WTC11 (cell line): ENCODE measurements at regions of chr11 and their contacts with region 1.

Region 1: GRCh38 chr11:1694064-1694845 is 2.7 kb upstream of the KRTAP5-6 start:
- DNase-seq: peak; percentile 92
- ATAC-seq: peak; percentile 86
- H3K4me3 Mint-ChIP-seq: peak overlapping the region; percentile 35; the same call in 1 of the 2 replicates
- H3K27ac Mint-ChIP-seq: no peak overlapping the region
- H3K4me1 Mint-ChIP-seq: peaks cover 3% of the 10 kb centered on the region
- H3K27me3 Mint-ChIP-seq: peaks cover 22% of the 10 kb centered on the region
- CTCF ChIP-seq: peak; percentile 93

Region 2: GRCh38 chr11:1706634-1707400 is 12.6 kb after region 1 on chr11:
- CTCF ChIA-PET with region 1: interaction called, 31 read pairs
- POLR2A ChIA-PET with region 1: no interaction called
- DNase-seq: peak; percentile 36
- ATAC-seq: no peak; the same call in 1 of the 2 replicates
- H3K4me3 Mint-ChIP-seq: no peak overlapping the region
- H3K27ac Mint-ChIP-seq: no peak overlapping the region
- H3K4me1 Mint-ChIP-seq: no peaks in the 10 kb centered on the region
- H3K27me3 Mint-ChIP-seq: peaks cover 58% of the 10 kb centered on the region
- CTCF ChIP-seq: no peak

Region 3: DNA sequence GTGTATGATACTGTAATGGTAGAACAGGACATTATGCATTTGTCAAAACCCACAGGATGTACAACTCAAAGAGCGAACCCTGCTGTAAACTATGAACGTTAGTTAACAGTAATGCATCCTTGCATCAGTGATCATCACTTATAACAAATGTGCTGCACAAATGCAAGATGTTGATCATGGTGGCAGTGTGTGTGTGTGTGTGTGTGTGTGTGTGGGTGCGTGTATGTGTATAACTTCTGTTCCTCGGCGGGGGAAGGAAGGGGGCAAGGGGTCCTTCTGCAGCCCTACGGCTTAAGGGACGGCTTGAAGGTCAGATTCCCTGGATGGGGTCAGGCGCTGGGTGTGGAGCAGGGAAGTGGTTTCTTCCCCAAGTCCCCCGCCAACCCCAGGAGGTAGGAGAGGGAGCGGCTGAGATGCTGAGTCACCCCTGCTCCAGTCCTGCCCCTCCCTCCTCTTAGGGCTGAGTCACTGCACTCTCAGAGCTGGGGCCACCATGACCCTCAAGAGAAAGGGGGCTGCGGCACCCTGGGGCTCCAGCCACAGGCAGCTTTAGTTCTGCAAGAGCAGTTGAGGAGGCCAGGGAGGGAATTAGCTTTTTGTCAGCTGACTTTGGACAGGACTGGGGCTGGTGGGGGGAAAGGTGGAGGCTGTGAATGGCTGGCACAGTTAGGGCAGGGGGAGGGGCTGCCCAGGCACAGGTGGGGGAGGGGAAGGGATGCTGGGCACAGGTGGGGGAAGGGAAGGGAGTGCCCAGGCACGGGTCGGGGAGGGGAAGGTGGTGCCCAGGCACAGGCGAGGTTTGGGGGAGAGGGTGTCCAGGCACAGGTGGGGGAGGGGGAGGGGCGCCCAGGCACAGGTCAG is 78.2 kb after region 1 on chr11:
- CTCF ChIA-PET with region 1: interaction called, 29 read pairs
- POLR2A ChIA-PET with region 1: interaction called, 4 read pairs
- DNase-seq: peak; percentile 61
- ATAC-seq: peak; percentile 90
- H3K4me3 Mint-ChIP-seq: no peak overlapping the region
- H3K27ac Mint-ChIP-seq: no peak overlapping the region
- H3K4me1 Mint-ChIP-seq: peaks cover 20% of the 10 kb centered on the region
- H3K27me3 Mint-ChIP-seq: peaks cover 8% of the 10 kb centered on the region
- CTCF ChIP-seq: no peak

Region 4: GRCh38 chr11:1832211-1832919 is 138.1 kb after region 1 on chr11:
- CTCF ChIA-PET with region 1: interaction called, 271 read pairs
- POLR2A ChIA-PET with region 1: no interaction called
- DNase-seq: peak; percentile 77
- ATAC-seq: peak; percentile 75
- H3K4me3 Mint-ChIP-seq: peak overlapping the region; percentile 49
- H3K27ac Mint-ChIP-seq: no peak overlapping the region
- H3K4me1 Mint-ChIP-seq: 0 out of 2 replicates have a peak, but pooled peaks cover 2% of the 10 kb centered on the region
- H3K27me3 Mint-ChIP-seq: peaks cover 5% of the 10 kb centered on the region
- CTCF ChIP-seq: peak; percentile 97

Region 5: DNA sequence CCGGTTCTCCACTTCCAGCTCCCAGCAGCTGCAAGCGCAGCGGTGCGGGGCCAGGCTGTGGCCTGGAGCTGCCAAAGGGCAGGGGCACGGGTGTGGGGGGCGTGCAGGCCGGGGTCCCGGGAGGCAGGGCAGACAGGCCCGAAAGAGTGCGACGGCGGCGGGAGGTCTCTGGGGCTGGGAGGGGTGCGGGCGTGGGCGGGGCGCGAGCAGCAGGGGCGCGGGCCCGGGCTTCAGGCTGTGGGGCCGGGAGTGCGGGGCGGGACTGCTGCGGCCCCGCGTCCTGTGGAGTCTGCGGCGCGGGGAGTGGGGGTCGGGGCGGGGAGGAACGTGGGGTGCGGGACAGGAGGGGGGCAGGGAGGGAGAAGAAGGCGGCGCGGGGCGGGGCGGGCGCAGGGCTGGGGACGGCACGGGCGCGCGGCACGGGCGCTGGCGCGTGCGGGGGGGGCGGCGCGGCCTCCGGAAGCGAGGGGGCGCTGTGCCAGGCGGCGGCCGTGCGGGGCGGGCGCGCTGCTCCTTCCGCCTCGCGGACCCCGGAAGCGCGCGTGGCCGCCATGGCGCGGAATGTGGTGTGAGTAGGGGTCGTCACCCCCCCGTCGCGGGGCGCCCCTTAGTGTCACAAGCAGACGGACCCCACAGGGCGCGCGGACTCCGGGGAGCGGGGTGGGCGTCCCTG is 252.7 kb after region 1 on chr11 and contains the start of gene MRPL23:
- CTCF ChIA-PET with region 1: interaction called, 11 read pairs
- POLR2A ChIA-PET with region 1: interaction called, 3 read pairs
- DNase-seq: no peak
- ATAC-seq: peak; percentile 27
- H3K4me3 Mint-ChIP-seq: no peak within 1 kb of the TSS
- H3K27ac Mint-ChIP-seq: no peak within 1 kb of the TSS
- H3K4me1 Mint-ChIP-seq: peaks cover 3% of the 10 kb centered on the region
- H3K27me3 Mint-ChIP-seq: no peaks in the 10 kb centered on the region
- CTCF ChIP-seq: no peak
- total RNA-seq, gene MRPL23: 59.4 to 73.0 TPM (median 61.0 TPM) in 3 replicates